Aorta (tissue), 5 donors: ENCODE measurements at regions of chr14 and their contacts with region 1.

Region 1: DNA sequence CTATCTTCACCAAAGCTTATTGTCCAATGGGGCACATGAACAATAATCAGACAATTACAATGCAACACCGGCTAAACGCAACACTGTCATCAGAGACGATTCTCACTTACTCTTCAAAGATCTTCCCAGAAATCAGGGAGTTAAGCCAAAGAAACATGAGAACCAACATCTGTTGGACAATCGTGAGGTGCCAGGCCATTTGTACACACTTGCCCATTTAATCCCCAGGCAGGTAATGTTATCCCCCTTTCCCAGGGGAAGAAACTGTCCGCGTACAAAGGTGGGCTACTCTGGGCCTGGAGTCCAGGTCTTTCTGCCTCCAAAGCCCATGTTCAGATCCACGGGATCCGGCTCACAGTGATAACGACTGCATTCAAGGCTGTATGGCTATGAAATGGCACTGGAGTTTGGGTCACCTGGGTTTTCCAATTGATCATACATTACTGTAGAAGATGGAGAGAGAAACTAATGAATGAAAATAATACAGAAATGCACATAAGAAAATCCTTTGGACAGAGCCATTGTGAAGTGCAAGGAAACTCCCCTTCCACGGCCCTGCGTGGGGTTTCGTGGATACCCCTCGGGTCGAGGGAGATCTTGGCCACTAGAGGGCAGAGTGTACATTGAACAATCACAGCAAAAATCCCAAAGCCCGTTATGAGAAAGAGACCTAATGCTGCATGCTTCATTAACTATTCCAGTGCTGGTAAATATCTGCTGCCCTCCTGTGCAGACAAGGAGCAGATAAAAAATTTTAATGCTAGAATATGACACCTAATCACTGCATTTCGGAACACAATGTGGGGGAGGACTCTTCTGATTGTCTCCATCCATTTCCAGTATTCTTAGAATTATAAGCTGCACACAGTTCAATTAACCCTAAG is 111.4 kb downstream of the EGLN3 start:
- DNase-seq: peak; percentile 64 to 78
- ATAC-seq: peak; percentile 81
- H3K4me3 ChIP-seq: no peak overlapping the region
- H3K27ac ChIP-seq: no peak overlapping the region
- H3K4me1 ChIP-seq: no peaks in the 10 kb centered on the region
- H3K27me3 ChIP-seq: no peaks in the 10 kb centered on the region

Region 2: GRCh38 chr14:33950320-33951182 is 111.1 kb after region 1 on chr14 and contains the start of gene EGLN3:
- intact Hi-C with region 1: loop called in 1 of 2 experiments (anchors 10 kb)
- DNase-seq: peak; percentile 92 to 97
- ATAC-seq: peak; percentile 98
- H3K4me3 ChIP-seq: peak within 1 kb of the TSS; percentile 23 to 82
- H3K27ac ChIP-seq: peak within 1 kb of the TSS in 1 of 2 donors; percentile 15
- H3K4me1 ChIP-seq: no peaks in the 10 kb centered on the region
- H3K27me3 ChIP-seq: no peaks in the 10 kb centered on the region
- total RNA-seq, gene EGLN3: 23.9 to 46.7 TPM

Region 3: DNA sequence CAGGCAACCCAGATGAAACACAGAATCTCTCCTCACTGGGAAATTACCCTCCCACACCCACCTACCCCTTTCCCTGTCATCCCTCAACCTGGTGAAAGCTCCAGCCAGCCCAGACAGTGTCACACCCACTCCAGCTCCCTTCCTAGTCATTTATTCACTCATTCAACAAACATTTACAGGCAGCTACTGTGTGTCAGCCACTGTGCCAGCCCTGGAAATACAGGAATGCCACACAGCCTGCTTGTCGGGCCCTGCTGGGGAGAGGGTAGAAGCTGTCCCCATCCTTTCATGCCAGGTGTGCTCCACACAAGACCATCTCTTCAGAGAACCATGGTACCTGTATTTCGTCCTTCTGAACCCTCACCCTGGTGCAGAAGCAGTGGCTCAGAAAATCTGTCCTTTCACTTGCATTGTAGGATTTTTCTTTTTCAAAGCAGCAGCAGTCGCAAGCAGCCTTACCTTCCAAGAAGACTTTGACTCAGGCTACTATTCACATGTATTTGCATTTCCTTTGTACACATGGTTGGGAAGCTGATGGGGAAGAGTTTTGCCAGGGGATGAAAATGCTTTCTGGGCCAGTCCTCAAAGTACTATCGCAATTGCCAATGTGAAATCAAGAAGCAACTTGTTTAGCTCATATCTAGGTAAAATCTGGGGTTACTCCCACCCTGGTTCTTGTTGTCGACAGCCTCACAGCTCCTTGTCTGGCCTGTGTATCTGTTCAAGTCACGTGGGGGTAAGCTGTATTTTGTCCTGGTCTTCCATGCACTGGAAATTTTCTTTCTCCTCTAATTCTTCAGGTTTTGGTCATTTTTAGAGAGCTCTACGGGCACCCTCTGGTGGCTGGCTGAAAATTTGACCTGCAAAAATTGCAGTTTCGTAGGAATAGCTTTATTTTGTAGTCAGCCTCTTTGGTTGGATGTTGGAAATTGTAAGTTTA is 258.9 kb after region 1 on chr14:
- intact Hi-C with region 1: loop called (anchors 2 kb)
- DNase-seq: no peak
- ATAC-seq: peak; percentile 54
- H3K4me3 ChIP-seq: no peak overlapping the region
- H3K27ac ChIP-seq: no peak overlapping the region
- H3K4me1 ChIP-seq: no peaks in the 10 kb centered on the region
- H3K27me3 ChIP-seq: no peaks in the 10 kb centered on the region

Region 4: DNA sequence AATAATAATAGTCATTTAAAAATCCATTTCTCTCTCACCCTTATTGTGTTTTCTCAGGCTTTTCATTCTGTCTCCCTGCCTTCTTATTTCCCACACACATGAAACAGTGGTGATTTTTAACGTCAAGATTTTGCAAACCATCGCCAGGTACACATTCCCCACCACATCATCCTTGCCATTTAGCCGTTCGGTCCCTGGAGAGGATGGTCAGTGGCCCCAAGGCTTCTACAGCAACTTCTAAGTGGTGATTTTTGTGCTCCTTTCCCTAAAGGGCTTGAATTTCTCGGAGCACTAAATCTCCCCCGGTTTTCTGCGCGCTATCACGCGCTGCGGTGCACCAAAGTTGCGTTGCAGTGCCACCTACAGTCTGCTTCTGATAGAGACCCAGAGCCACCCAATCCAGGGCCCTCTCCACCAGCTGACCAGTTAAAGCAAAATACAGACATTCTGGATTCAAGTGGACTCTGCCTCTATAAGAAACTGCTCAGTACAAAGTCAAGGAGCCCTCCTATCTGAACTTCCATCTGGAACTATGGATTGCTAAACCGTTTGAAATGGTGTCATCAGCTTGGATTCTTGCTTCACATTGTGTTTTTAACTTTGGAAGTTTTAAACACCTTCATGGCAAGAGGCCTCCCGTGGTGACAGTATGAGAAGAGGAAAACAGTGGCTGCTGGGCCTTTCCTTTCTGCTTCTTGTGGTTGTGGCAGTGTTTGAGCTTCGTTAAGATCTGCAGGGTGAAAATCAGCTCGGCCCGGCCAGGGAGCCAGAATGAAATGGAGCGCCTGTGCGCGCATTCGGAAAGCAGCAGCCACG is 388.6 kb after region 1 on chr14:
- intact Hi-C with region 1: loop called in 1 of 2 experiments (anchors 5 kb)
- DNase-seq: peak; percentile 72 to 82
- ATAC-seq: peak; percentile 91
- H3K4me3 ChIP-seq: no peak overlapping the region
- H3K27ac ChIP-seq: no peak overlapping the region
- H3K4me1 ChIP-seq: no peaks in the 10 kb centered on the region
- H3K27me3 ChIP-seq: no peaks in the 10 kb centered on the region

Region 5: GRCh38 chr14:34300882-34301734 is 461.7 kb after region 1 on chr14:
- intact Hi-C with region 1: loop called in 1 of 2 experiments (anchors 5 kb)
- DNase-seq: no peak
- ATAC-seq: no peak
- H3K4me3 ChIP-seq: no peak overlapping the region
- H3K27ac ChIP-seq: no peak overlapping the region
- H3K4me1 ChIP-seq: no peaks in the 10 kb centered on the region
- H3K27me3 ChIP-seq: no peaks in the 10 kb centered on the region